ENCODE measurements at regions of chr17 and their contacts with region 1.

Region 1: GRCh38 chr17:34361478-34362061 is 1.5 kb downstream of the CCL1 start:
- DNase-seq: peak; percentile 86
- ATAC-seq: peak; percentile 93
- H3K4me3 ChIP-seq: no peak overlapping the region
- H3K27ac ChIP-seq: no peak overlapping the region
- H3K4me1 ChIP-seq: no peaks in the 10 kb centered on the region
- H3K27me3 ChIP-seq: peaks cover 6% of the 10 kb centered on the region; the same call in 1 of the 2 replicates
- CTCF ChIP-seq: peak; percentile 100
- POLR2A ChIP-seq: peak; percentile 60; the same call in 1 of the 2 replicates
- RAD21 ChIP-seq: peak; percentile 100

Region 2: DNA sequence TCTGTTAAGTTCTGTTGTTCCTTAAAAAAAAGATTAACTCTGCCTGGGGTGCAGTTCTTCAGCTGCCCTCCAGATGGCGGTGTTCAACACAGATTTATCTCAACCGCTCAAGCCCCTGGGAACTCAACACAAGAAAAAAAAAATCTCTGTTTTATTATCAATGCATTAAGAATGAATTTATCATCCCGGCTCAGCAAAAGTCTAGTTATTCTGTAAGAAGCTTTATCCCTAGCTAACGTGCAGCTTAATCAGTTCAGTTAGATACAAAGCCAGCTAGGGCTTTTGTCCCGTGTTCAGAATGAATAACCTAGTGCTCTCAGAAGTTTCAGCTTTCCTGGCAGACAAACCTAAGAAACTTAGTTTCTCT is 582.4 kb before region 1 on chr17:
- CTCF ChIA-PET with region 1: interaction called, 4 read pairs
- POLR2A ChIA-PET with region 1: no interaction called
- dilution Hi-C with region 1: no loop called
- in situ Hi-C with region 1: loop called (anchors 10 kb)
- intact Hi-C with region 1: loop called (anchors 1 kb)
- DNase-seq: peak; percentile 69
- ATAC-seq: peak; percentile 97
- H3K4me3 ChIP-seq: no peak overlapping the region
- H3K27ac ChIP-seq: no peak overlapping the region
- H3K4me1 ChIP-seq: no peaks in the 10 kb centered on the region
- H3K27me3 ChIP-seq: peaks cover 2% of the 10 kb centered on the region; the same call in 1 of the 2 replicates
- CTCF ChIP-seq: peak; percentile 89
- POLR2A ChIP-seq: no peak
- RAD21 ChIP-seq: peak; percentile 54

Region 3: GRCh38 chr17:34081269-34081668 is 280.3 kb before region 1 on chr17:
- CTCF ChIA-PET with region 1: interaction called, 6 read pairs
- POLR2A ChIA-PET with region 1: no interaction called
- dilution Hi-C with region 1: no loop called
- in situ Hi-C with region 1: no loop called
- intact Hi-C with region 1: loop called (anchors 1 kb)
- DNase-seq: peak; percentile 6
- ATAC-seq: peak; percentile 68
- H3K4me3 ChIP-seq: no peak overlapping the region
- H3K27ac ChIP-seq: no peak overlapping the region
- H3K4me1 ChIP-seq: no peaks in the 10 kb centered on the region
- H3K27me3 ChIP-seq: no peaks in the 10 kb centered on the region
- CTCF ChIP-seq: peak; percentile 41
- POLR2A ChIP-seq: no peak
- RAD21 ChIP-seq: no peak

Region 4: DNA sequence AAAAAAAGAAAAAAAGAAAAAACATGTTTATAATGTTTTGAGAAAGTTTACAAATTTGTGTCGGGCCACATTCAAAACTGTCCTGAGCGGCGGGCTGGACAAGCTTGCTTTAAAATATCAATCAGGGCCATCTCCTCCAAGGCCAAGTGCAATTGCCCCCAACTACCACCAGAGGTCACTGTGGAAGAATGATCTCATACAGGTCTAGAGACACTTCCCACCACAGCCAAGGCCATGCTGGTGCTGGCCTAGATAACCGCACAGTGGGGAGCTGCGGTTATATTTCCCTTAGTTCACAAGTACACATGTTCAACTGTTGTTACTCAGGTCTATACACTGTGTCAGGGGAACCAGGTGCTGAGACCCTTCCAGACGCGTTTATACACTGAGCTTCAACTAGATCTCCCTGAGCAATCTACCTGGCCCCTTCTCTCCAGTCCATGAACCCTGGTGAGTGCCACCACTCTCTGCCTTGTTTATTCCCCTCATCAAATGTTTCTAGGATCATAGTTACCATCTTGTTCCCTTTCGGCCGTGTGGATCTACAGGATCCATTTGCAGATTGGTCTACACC is 190.2 kb before region 1 on chr17:
- CTCF ChIA-PET with region 1: interaction called, 12 read pairs
- POLR2A ChIA-PET with region 1: no interaction called
- dilution Hi-C with region 1: no loop called
- in situ Hi-C with region 1: no loop called
- intact Hi-C with region 1: no loop called
- DNase-seq: peak; percentile 53
- ATAC-seq: peak; percentile 62
- H3K4me3 ChIP-seq: no peak overlapping the region
- H3K27ac ChIP-seq: no peak overlapping the region
- H3K4me1 ChIP-seq: peaks cover 7% of the 10 kb centered on the region
- H3K27me3 ChIP-seq: no peaks in the 10 kb centered on the region
- CTCF ChIP-seq: peak; percentile 68
- POLR2A ChIP-seq: no peak
- RAD21 ChIP-seq: peak; percentile 41

Region 5: GRCh38 chr17:34306466-34306865 is 55.1 kb before region 1 on chr17:
- CTCF ChIA-PET with region 1: interaction called, 14 read pairs
- POLR2A ChIA-PET with region 1: no interaction called
- dilution Hi-C with region 1: no loop called
- in situ Hi-C with region 1: loop called (anchors 5 kb)
- intact Hi-C with region 1: loop called (anchors 1 kb)
- DNase-seq: peak; percentile 87
- ATAC-seq: peak; percentile 87
- H3K4me3 ChIP-seq: no peak overlapping the region
- H3K27ac ChIP-seq: no peak overlapping the region
- H3K4me1 ChIP-seq: peaks cover 8% of the 10 kb centered on the region
- H3K27me3 ChIP-seq: no peaks in the 10 kb centered on the region
- CTCF ChIP-seq: peak; percentile 81
- POLR2A ChIP-seq: no peak
- RAD21 ChIP-seq: peak; percentile 91

Region 6: GRCh38 chr17:34314279-34314678 is 47.3 kb before region 1 on chr17:
- CTCF ChIA-PET with region 1: interaction called, 7 read pairs
- POLR2A ChIA-PET with region 1: no interaction called
- dilution Hi-C with region 1: no loop called
- in situ Hi-C with region 1: loop called (anchors 5 kb)
- intact Hi-C with region 1: loop called (anchors 2 kb)
- DNase-seq: peak; percentile 52
- ATAC-seq: peak; percentile 65
- H3K4me3 ChIP-seq: no peak overlapping the region
- H3K27ac ChIP-seq: peak overlapping the region; percentile 66; the same call in 1 of the 2 replicates
- H3K4me1 ChIP-seq: peaks cover 9% of the 10 kb centered on the region; the same call in 1 of the 2 replicates
- H3K27me3 ChIP-seq: no peaks in the 10 kb centered on the region
- CTCF ChIP-seq: no peak
- POLR2A ChIP-seq: no peak
- RAD21 ChIP-seq: no peak